Ovary (tissue), 10 donors: ENCODE measurements at regions of chr10 and their contacts with region 1.

Region 1: GRCh38 chr10:49187950-49188761 is at the start of gene TMEM273:
- DNase-seq: peak in 1 of 5 donors; percentile 42
- H3K4me3 ChIP-seq: no peak within 1 kb of the TSS
- H3K27ac ChIP-seq: no peak within 1 kb of the TSS
- H3K4me1 ChIP-seq: no peaks in the 10 kb centered on the region
- H3K27me3 ChIP-seq: no peaks in the 10 kb centered on the region
- CTCF ChIP-seq: no peak
- EP300 ChIP-seq: no peak
- POLR2A ChIP-seq: no peak
- total RNA-seq, gene TMEM273: 1.5 to 17.1 (median 4.3) TPM

Region 2: GRCh38 chr10:49237985-49238384 is 49.8 kb after region 1 on chr10:
- intact Hi-C with region 1: loop called in 1 of 4 experiments (anchors 5 kb)
- DNase-seq: no peak
- H3K4me3 ChIP-seq: no peak overlapping the region
- H3K27ac ChIP-seq: no peak overlapping the region
- H3K4me1 ChIP-seq: no peaks in the 10 kb centered on the region
- H3K27me3 ChIP-seq: no peaks in the 10 kb centered on the region
- CTCF ChIP-seq: no peak
- EP300 ChIP-seq: no peak
- POLR2A ChIP-seq: no peak

Region 3: GRCh38 chr10:49369216-49370162 is 181.3 kb after region 1 on chr10:
- intact Hi-C with region 1: no loop called
- DNase-seq: no peak
- H3K4me3 ChIP-seq: no peak overlapping the region
- H3K27ac ChIP-seq: no peak overlapping the region
- H3K4me1 ChIP-seq: no peaks in the 10 kb centered on the region
- H3K27me3 ChIP-seq: no peaks in the 10 kb centered on the region
- CTCF ChIP-seq: no peak
- EP300 ChIP-seq: no peak
- POLR2A ChIP-seq: no peak